HCT116 (cell line): ENCODE measurements at regions of chr12 and their contacts with region 1.

Region 1: GRCh38 chr12:57005980-57006808 is at the start of gene ZBTB39:
- DNase-seq: peak; percentile 16
- ATAC-seq: peak; percentile 87
- H3K4me3 ChIP-seq: peak within 1 kb of the TSS; percentile 82 to 96
- H3K27ac ChIP-seq: peak within 1 kb of the TSS; percentile 50
- H3K4me1 ChIP-seq: peaks cover 4 to 30% of the 10 kb centered on the region in 2 experiments
- H3K27me3 ChIP-seq: no peaks in the 10 kb centered on the region
- CTCF ChIP-seq: peak; percentile 47 to 85 (median 60)
- POLR2A ChIP-seq: peak; percentile 37
- RAD21 ChIP-seq: no peak
- total RNA-seq, gene ZBTB39: 12.3 TPM

Region 2: GRCh38 chr12:56763753-56764657 is 242.2 kb before region 1 on chr12:
- CTCF ChIA-PET with region 1: interaction called, 11 read pairs
- POLR2A ChIA-PET with region 1: no interaction called
- RAD21 ChIA-PET with region 1: interaction called in 1 of 2 experiments, 4 read pairs
- intact Hi-C with region 1: loop called (anchors 5 kb)
- DNase-seq: no peak
- ATAC-seq: no peak
- H3K4me3 ChIP-seq: no peak overlapping the region
- H3K27ac ChIP-seq: no peak overlapping the region
- H3K4me1 ChIP-seq: no peaks in the 10 kb centered on the region
- H3K27me3 ChIP-seq: no peaks in the 10 kb centered on the region
- CTCF ChIP-seq: no peak
- POLR2A ChIP-seq: no peak
- RAD21 ChIP-seq: no peak

Region 3: DNA sequence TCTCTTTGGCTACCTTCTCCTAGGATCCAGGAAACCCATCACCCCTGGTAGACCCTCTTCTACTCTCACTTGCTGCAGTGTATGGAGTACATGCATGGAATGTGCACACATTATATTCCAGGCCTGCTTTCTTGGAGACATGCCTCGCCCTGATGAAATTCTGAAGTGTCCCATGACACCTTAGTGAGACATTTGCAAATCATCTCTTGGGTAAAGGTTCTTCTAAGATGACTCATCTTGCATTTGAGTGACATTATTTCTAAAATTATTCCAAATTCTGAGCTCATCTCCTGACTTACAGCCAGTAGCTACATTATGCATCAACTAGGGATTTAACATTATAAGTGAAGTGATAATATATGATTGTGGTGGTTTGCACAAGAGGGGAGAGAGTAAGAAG is 121.8 kb before region 1 on chr12:
- CTCF ChIA-PET with region 1: no interaction called
- POLR2A ChIA-PET with region 1: no interaction called
- RAD21 ChIA-PET with region 1: no interaction called
- intact Hi-C with region 1: no loop called
- DNase-seq: no peak
- ATAC-seq: no peak
- H3K4me3 ChIP-seq: no peak overlapping the region
- H3K27ac ChIP-seq: no peak overlapping the region
- H3K4me1 ChIP-seq: no peaks in the 10 kb centered on the region
- H3K27me3 ChIP-seq: no peaks in the 10 kb centered on the region
- CTCF ChIP-seq: no peak
- POLR2A ChIP-seq: no peak
- RAD21 ChIP-seq: no peak

Region 4: DNA sequence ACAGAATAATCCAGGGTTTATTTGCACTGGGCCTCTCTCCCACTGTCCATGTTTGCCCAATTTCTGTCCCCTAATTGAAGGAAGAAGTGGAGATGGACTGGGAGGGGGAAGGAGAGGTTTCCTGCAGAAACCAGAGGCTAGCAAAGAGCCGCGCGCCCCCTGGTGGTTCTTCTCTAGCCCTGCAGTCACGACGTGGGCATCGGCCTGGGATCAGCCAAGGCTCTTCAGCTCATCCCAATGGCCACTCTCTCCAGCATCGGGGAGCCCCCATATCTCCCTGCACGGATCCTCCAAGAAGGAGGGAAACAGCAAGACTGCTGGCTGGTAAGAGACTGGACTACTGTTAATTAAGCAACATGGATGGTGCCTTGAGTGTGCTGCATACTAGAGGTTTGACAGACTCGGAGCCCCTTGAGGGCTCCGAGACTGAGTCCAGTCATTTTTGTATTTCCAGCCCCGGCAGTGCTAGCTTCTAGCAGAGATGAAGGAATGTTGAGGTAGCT is 18.6 kb before region 1 on chr12:
- CTCF ChIA-PET with region 1: interaction called, 14 read pairs
- POLR2A ChIA-PET with region 1: no interaction called
- RAD21 ChIA-PET with region 1: no interaction called
- intact Hi-C with region 1: no loop called
- DNase-seq: peak; percentile 58
- ATAC-seq: peak; percentile 73
- H3K4me3 ChIP-seq: no peak overlapping the region
- H3K27ac ChIP-seq: no peak overlapping the region
- H3K4me1 ChIP-seq: peaks cover 10 to 30% of the 10 kb centered on the region in 2 experiments; a peak in 3 of 4 replicates
- H3K27me3 ChIP-seq: no peaks in the 10 kb centered on the region
- CTCF ChIP-seq: peak; percentile 94 to 97 (median 95)
- POLR2A ChIP-seq: no peak
- RAD21 ChIP-seq: peak; percentile 99

Region 5: GRCh38 chr12:57111031-57111734 is 105.0 kb after region 1 on chr12 and contains the start of gene STAT6:
- CTCF ChIA-PET with region 1: interaction called, 26 read pairs
- POLR2A ChIA-PET with region 1: no interaction called
- RAD21 ChIA-PET with region 1: no interaction called
- intact Hi-C with region 1: loop called (anchors 1 kb)
- DNase-seq: no peak
- ATAC-seq: peak; percentile 60
- H3K4me3 ChIP-seq: peak within 1 kb of the TSS; percentile 80 to 81
- H3K27ac ChIP-seq: peak within 1 kb of the TSS; percentile 91
- H3K4me1 ChIP-seq: peaks cover 11 to 36% of the 10 kb centered on the region in 2 experiments
- H3K27me3 ChIP-seq: no peaks in the 10 kb centered on the region
- CTCF ChIP-seq: no peak; a peak in 1 of 6 replicates
- POLR2A ChIP-seq: no peak
- RAD21 ChIP-seq: no peak
- total RNA-seq, gene STAT6: 78.5 TPM

Region 6: DNA sequence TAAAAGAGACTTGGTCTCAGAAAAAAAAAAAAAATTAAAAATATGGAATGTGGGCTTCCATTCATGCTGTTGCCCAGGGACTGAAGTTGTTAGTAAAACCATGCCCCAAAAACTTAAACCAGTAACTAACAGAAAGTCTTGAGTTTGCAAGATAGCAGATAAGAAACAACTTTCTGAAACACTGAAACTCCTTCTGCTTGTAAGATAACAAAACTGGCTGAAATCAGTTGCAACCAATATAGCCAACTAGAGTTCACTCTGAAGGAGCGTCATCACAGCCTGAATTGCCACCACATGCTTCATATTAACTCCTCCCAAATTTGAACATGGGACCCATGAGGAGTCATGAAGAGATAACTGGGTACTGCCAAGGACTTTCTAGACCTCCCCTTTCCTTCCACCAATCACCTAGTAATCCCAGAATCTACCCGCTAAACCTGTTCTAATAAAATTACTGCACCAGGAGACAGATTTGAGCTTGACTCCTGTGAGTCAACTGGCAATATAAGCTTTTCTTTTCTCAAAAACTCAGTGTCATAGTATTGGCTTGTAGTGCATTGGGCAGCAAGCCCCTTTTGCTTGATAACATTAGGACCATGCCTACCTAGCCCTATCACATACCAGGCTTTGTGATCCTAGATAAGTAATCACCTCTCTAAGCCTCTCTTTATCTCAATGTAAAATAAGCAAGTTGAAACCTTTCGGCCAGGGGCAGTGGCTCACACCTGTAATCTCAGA is 371.1 kb after region 1 on chr12:
- CTCF ChIA-PET with region 1: no interaction called
- POLR2A ChIA-PET with region 1: no interaction called
- RAD21 ChIA-PET with region 1: no interaction called
- intact Hi-C with region 1: no loop called
- DNase-seq: no peak
- ATAC-seq: no peak
- H3K4me3 ChIP-seq: no peak overlapping the region
- H3K27ac ChIP-seq: no peak overlapping the region
- H3K4me1 ChIP-seq: no peaks in the 10 kb centered on the region; a peak in 2 of 4 replicates
- H3K27me3 ChIP-seq: no peaks in the 10 kb centered on the region
- CTCF ChIP-seq: no peak
- POLR2A ChIP-seq: no peak
- RAD21 ChIP-seq: no peak